B cell (primary cell): ENCODE measurements at regions of chr7 and their contacts with region 1.

Region 1: DNA sequence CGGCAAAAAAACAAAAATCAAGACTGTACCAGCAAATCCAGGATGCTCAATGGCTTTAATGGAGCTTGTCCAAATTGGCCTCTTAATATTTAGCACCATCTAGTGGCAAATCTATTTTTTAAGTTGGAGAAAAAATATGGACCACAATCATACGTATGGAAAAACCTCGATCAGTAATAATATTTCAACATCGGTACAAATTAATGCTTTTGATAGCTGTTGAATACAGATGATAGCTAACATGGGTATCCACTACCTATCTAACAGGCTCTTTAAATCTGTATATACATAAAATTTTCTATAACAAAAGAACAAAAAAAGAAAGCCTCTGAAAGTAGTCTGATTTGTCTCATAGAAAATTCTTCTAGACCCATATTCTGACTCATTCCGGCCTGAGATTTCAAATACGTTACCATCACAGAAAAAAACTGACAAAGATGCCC is 29.2 kb downstream of the COA1 start:
- DNase-seq: peak; percentile 80
- ATAC-seq: peak; percentile 78
- H3K4me3 ChIP-seq: no peak overlapping the region
- H3K4me3 Mint-ChIP-seq: peak overlapping the region; percentile 12
- H3K27ac ChIP-seq: peak overlapping the region in 1 of 2 donors; percentile 37
- H3K27ac Mint-ChIP-seq: peak overlapping the region; percentile 22
- H3K4me1 ChIP-seq: peaks cover 33% of the 10 kb centered on the region in 2 donors
- H3K4me1 Mint-ChIP-seq: peaks cover 25% of the 10 kb centered on the region
- H3K27me3 ChIP-seq: no peaks in the 10 kb centered on the region
- H3K27me3 Mint-ChIP-seq: no peaks in the 10 kb centered on the region
- CTCF ChIP-seq: peak; percentile 91

Region 2: DNA sequence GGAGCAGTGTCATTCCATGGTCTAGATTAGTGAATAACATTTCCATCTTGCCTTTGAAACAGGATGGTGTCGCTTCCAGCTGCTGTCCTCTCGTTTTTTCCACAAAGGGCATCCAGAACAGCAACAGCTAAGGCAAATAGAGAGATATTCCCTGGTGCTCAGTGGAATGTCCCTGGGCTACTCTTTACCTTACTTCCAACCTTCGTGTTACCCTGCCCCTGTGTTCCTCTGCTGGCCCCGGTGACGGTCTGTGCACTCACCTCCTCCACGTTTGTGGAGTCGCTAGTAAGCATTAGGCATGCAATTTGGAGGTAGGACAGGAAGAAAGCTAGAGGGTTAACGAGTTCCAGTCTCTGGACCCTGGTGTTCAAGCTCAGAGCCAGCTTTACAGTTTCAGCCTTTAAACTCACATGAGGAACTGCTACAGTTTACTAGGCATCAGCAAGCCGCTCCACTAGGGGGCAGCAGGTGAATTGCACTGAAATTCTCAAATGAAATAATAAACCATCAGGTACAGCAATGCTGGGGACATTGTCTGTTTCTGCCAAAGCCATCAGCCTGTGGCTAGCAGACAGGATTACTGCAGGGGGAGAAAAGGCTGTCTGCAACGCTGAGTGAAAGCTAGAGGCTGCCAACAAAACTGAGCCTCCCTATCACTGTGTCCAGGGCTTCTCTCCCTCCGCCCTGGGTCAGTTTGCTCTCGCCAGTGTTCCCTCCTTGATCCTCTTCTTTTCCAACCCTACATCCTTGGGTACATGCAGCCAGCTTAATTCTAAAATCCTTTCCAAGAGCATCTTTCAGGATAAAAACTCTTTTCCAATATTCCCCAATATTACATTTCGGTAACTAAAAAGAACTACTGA is 758.9 kb before region 1 on chr7:
- CTCF ChIA-PET with region 1: interaction called, 19 read pairs
- POLR2A ChIA-PET with region 1: no interaction called
- intact Hi-C with region 1: no loop called
- DNase-seq: peak; percentile 74
- ATAC-seq: peak; percentile 53
- H3K4me3 ChIP-seq: no peak overlapping the region
- H3K4me3 Mint-ChIP-seq: no peak overlapping the region
- H3K27ac ChIP-seq: no peak overlapping the region
- H3K27ac Mint-ChIP-seq: no peak overlapping the region
- H3K4me1 ChIP-seq: no peaks in the 10 kb centered on the region
- H3K4me1 Mint-ChIP-seq: peaks cover 6% of the 10 kb centered on the region
- H3K27me3 ChIP-seq: no peaks in the 10 kb centered on the region
- H3K27me3 Mint-ChIP-seq: no peaks in the 10 kb centered on the region
- CTCF ChIP-seq: peak; percentile 91

Region 3: GRCh38 chr7:43602271-43602670 is 97.8 kb before region 1 on chr7:
- CTCF ChIA-PET with region 1: interaction called, 15 read pairs
- POLR2A ChIA-PET with region 1: interaction called, 5 read pairs
- intact Hi-C with region 1: no loop called
- DNase-seq: no peak
- ATAC-seq: no peak
- H3K4me3 ChIP-seq: no peak overlapping the region
- H3K4me3 Mint-ChIP-seq: no peak overlapping the region
- H3K27ac ChIP-seq: peak overlapping the region in 1 of 2 donors; percentile 67
- H3K27ac Mint-ChIP-seq: no peak overlapping the region
- H3K4me1 ChIP-seq: peaks cover 27 to 58% of the 10 kb centered on the region in 2 donors
- H3K4me1 Mint-ChIP-seq: peaks cover 38% of the 10 kb centered on the region
- H3K27me3 ChIP-seq: no peaks in the 10 kb centered on the region
- H3K27me3 Mint-ChIP-seq: no peaks in the 10 kb centered on the region
- CTCF ChIP-seq: no peak

Region 4: GRCh38 chr7:43625453-43625852 is 74.6 kb before region 1 on chr7:
- CTCF ChIA-PET with region 1: interaction called, 58 read pairs
- POLR2A ChIA-PET with region 1: no interaction called
- intact Hi-C with region 1: loop called (anchors 1 kb)
- DNase-seq: peak; percentile 58
- ATAC-seq: peak; percentile 64
- H3K4me3 ChIP-seq: peak overlapping the region in 1 of 5 experiments; percentile 6
- H3K4me3 Mint-ChIP-seq: peak overlapping the region; percentile 64
- H3K27ac ChIP-seq: peak overlapping the region; percentile 37 to 79
- H3K27ac Mint-ChIP-seq: peak overlapping the region; percentile 67
- H3K4me1 ChIP-seq: peaks cover 47 to 50% of the 10 kb centered on the region in 2 donors
- H3K4me1 Mint-ChIP-seq: peaks cover 81% of the 10 kb centered on the region
- H3K27me3 ChIP-seq: no peaks in the 10 kb centered on the region
- H3K27me3 Mint-ChIP-seq: no peaks in the 10 kb centered on the region
- CTCF ChIP-seq: no peak

Region 5: DNA sequence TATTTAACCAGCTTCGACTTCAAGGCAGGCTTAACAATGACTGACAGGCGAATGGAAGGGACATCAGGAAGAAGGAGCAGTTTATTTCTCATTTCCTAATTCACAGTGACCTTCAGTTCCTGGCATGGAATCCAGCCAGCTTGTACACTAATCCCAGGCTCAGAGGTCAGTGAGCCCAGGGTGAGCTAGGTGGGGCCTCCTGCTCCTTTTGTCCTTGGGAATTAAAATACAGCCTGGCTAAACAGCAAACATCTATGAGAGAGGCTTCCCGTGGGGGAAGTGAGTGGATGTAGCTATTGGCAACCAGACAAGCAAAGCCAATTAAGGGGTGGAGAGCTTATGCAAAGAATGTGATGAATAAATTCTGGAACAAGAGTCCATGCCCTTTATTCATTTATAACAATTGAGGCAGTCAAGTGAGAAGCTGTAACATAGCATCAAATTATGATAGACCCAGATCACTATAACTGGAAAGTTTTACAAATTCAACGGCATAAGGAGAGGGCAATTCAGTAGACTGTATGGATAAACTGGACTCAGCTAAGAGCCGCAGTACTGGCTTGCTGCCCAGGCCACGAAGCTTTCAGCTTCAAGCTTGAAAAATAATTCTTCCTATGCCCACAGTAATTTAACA is 60.1 kb before region 1 on chr7:
- CTCF ChIA-PET with region 1: interaction called, 35 read pairs
- POLR2A ChIA-PET with region 1: interaction called, 3 read pairs
- intact Hi-C with region 1: no loop called
- DNase-seq: no peak
- ATAC-seq: no peak
- H3K4me3 ChIP-seq: no peak overlapping the region
- H3K4me3 Mint-ChIP-seq: no peak overlapping the region
- H3K27ac ChIP-seq: peak overlapping the region; percentile 30 to 97
- H3K27ac Mint-ChIP-seq: peak overlapping the region; percentile 8
- H3K4me1 ChIP-seq: peaks cover 42 to 46% of the 10 kb centered on the region in 2 donors
- H3K4me1 Mint-ChIP-seq: peaks cover 70% of the 10 kb centered on the region
- H3K27me3 ChIP-seq: no peaks in the 10 kb centered on the region
- H3K27me3 Mint-ChIP-seq: no peaks in the 10 kb centered on the region
- CTCF ChIP-seq: no peak

Region 6: DNA sequence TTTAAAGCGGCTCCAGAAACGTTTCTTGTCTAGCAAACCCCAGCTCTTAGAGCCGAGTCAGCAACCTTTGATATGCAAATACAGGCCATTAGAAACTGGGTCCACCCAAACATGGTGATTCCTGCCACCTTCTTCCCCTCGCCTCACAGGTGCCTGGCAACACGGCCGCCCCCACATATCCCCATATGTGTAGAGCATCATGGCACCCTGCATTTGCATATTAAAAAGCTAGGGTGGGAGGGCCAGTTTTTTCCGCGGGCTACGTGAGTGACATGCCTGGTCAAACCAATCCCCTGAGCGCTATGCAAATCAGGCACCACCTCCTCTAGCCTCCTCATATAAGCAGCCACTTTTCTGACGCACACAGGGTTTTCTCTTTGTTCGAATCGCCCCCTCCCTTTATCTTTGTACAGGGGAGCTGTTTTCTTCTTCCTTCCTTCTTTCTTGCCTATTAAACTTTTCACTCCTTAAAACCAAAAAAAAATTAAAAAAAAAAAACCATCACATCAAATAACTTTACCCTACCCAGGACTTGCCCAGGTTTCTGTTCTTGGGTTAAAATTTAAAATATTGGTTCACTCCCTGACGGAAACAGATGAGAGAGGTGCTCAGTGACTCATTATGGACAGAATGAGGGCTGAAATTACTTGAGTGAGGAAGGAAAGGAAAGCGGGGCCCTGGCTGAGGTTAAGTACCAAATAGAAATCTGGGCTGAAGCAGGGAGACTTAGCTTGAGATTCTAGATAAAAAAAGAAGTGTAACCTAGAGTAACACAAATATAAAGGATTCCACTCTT is 30.6 kb before region 1 on chr7:
- CTCF ChIA-PET with region 1: interaction called, 15 read pairs
- POLR2A ChIA-PET with region 1: no interaction called
- intact Hi-C with region 1: no loop called
- DNase-seq: peak; percentile 64
- ATAC-seq: peak; percentile 66
- H3K4me3 ChIP-seq: peak overlapping the region in 2 of 5 experiments; percentile 3 to 19
- H3K4me3 Mint-ChIP-seq: peak overlapping the region; percentile 50
- H3K27ac ChIP-seq: peak overlapping the region; percentile 4 to 71
- H3K27ac Mint-ChIP-seq: peak overlapping the region; percentile 71
- H3K4me1 ChIP-seq: peaks cover 20 to 46% of the 10 kb centered on the region in 2 donors
- H3K4me1 Mint-ChIP-seq: peaks cover 53% of the 10 kb centered on the region
- H3K27me3 ChIP-seq: no peaks in the 10 kb centered on the region
- H3K27me3 Mint-ChIP-seq: no peaks in the 10 kb centered on the region
- CTCF ChIP-seq: no peak

Region 7: GRCh38 chr7:43721193-43721806 is 21.2 kb after region 1 on chr7:
- CTCF ChIA-PET with region 1: interaction called, 43 read pairs
- POLR2A ChIA-PET with region 1: no interaction called
- intact Hi-C with region 1: loop called (anchors 1 kb)
- DNase-seq: peak; percentile 73
- ATAC-seq: peak; percentile 33
- H3K4me3 ChIP-seq: no peak overlapping the region
- H3K4me3 Mint-ChIP-seq: no peak overlapping the region
- H3K27ac ChIP-seq: no peak overlapping the region
- H3K27ac Mint-ChIP-seq: no peak overlapping the region
- H3K4me1 ChIP-seq: no peaks in the 10 kb centered on the region
- H3K4me1 Mint-ChIP-seq: peaks cover 22% of the 10 kb centered on the region
- H3K27me3 ChIP-seq: no peaks in the 10 kb centered on the region
- H3K27me3 Mint-ChIP-seq: no peaks in the 10 kb centered on the region
- CTCF ChIP-seq: peak; percentile 89

Region 8: GRCh38 chr7:44044315-44045225 is 344.5 kb after region 1 on chr7 and contains the start of gene DBNL:
- CTCF ChIA-PET with region 1: no interaction called
- POLR2A ChIA-PET with region 1: no interaction called
- intact Hi-C with region 1: no loop called
- DNase-seq: peak; percentile 89
- ATAC-seq: peak; percentile 42
- H3K4me3 ChIP-seq: peak within 1 kb of the TSS; percentile 86 to 96 (median 91)
- H3K4me3 Mint-ChIP-seq: peak within 1 kb of the TSS; percentile 98
- H3K27ac ChIP-seq: peak within 1 kb of the TSS; percentile 83 to 96
- H3K27ac Mint-ChIP-seq: peak within 1 kb of the TSS; percentile 99
- H3K4me1 ChIP-seq: peaks cover 51 to 60% of the 10 kb centered on the region in 2 donors
- H3K4me1 Mint-ChIP-seq: peaks cover 58% of the 10 kb centered on the region
- H3K27me3 ChIP-seq: no peaks in the 10 kb centered on the region
- H3K27me3 Mint-ChIP-seq: no peaks in the 10 kb centered on the region
- CTCF ChIP-seq: no peak
- total RNA-seq, gene DBNL: 311 and 335 TPM in 2 replicates